ENCODE measurements at regions of chr5 and their contacts with region 1.

Region 1: GRCh38 chr5:14996997-14997396 is 125.4 kb upstream of the ANKH start:
- DNase-seq: no peak
- H3K4me3 Mint-ChIP-seq: no peak overlapping the region
- H3K27ac Mint-ChIP-seq: no peak overlapping the region
- H3K4me1 Mint-ChIP-seq: peaks cover 40% of the 10 kb centered on the region
- H3K27me3 Mint-ChIP-seq: peaks cover 18% of the 10 kb centered on the region

Region 2: GRCh38 chr5:14706615-14707021 is 290.4 kb before region 1 on chr5:
- CTCF ChIA-PET with region 1: interaction called, 3 read pairs
- POLR2A ChIA-PET with region 1: interaction called, 10 read pairs
- DNase-seq: peak; percentile 47
- H3K4me3 Mint-ChIP-seq: peak overlapping the region; percentile 69
- H3K27ac Mint-ChIP-seq: peak overlapping the region; percentile 100
- H3K4me1 Mint-ChIP-seq: peaks cover 80% of the 10 kb centered on the region
- H3K27me3 Mint-ChIP-seq: no peaks in the 10 kb centered on the region

Region 3: DNA sequence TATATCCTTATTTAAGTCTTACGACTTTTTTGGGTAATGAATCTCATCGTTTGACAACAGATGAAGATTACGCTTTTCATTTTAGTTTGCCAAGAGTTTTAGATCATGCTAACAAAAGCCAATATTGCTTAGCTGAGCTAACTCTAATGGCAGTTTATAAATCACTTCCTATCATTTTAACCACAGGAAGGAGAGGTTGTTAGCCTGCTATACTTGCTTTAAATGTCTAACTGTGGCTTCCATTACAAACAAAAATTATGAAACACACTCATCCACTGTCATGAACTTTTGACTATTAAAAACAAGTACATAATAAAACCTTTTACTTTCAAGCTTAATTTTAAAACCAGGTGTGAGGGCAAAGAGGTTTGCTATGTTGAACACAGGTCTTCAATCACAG is 71.7 kb before region 1 on chr5:
- CTCF ChIA-PET with region 1: interaction called, 5 read pairs
- POLR2A ChIA-PET with region 1: interaction called, 10 read pairs
- DNase-seq: no peak
- H3K4me3 Mint-ChIP-seq: peak overlapping the region; percentile 49
- H3K27ac Mint-ChIP-seq: peak overlapping the region; percentile 88
- H3K4me1 Mint-ChIP-seq: peaks cover 44% of the 10 kb centered on the region
- H3K27me3 Mint-ChIP-seq: no peaks in the 10 kb centered on the region

Region 4: GRCh38 chr5:14958196-14958595 is 38.8 kb before region 1 on chr5:
- CTCF ChIA-PET with region 1: interaction called, 13 read pairs
- POLR2A ChIA-PET with region 1: no interaction called
- DNase-seq: no peak
- H3K4me3 Mint-ChIP-seq: no peak overlapping the region
- H3K27ac Mint-ChIP-seq: no peak overlapping the region
- H3K4me1 Mint-ChIP-seq: no peaks in the 10 kb centered on the region
- H3K27me3 Mint-ChIP-seq: no peaks in the 10 kb centered on the region

Region 5: GRCh38 chr5:14983666-14984441 is 13.1 kb before region 1 on chr5:
- CTCF ChIA-PET with region 1: interaction called, 5 read pairs
- POLR2A ChIA-PET with region 1: interaction called, 16 read pairs
- DNase-seq: peak; percentile 42
- H3K4me3 Mint-ChIP-seq: no peak overlapping the region
- H3K27ac Mint-ChIP-seq: no peak overlapping the region
- H3K4me1 Mint-ChIP-seq: peaks cover 21% of the 10 kb centered on the region
- H3K27me3 Mint-ChIP-seq: no peaks in the 10 kb centered on the region

Region 6: GRCh38 chr5:15092801-15093200 is 95.8 kb after region 1 on chr5:
- CTCF ChIA-PET with region 1: no interaction called
- POLR2A ChIA-PET with region 1: no interaction called
- DNase-seq: no peak
- H3K4me3 Mint-ChIP-seq: no peak overlapping the region
- H3K27ac Mint-ChIP-seq: no peak overlapping the region
- H3K4me1 Mint-ChIP-seq: no peaks in the 10 kb centered on the region
- H3K27me3 Mint-ChIP-seq: no peaks in the 10 kb centered on the region

Measured in activated CD4-positive, alpha-beta memory T cell treated with anti-CD3 and anti-CD28 coated beads, Interleukin-2, amount 10 ng/mL, durations not matched to agents 7 days and 5 days (primary cell).